ENCODE measurements at regions of chr17 and their contacts with region 1.

Region 1: GRCh38 chr17:75131280-75132017 is at the start of gene NT5C:
- DNase-seq: peak; percentile 70 to 78
- ATAC-seq: peak; percentile 84 to 88 (median 86)
- H3K4me3 ChIP-seq: peak within 1 kb of the TSS; percentile 83
- H3K4me3 Mint-ChIP-seq: peak within 1 kb of the TSS; percentile 89
- H3K27ac ChIP-seq: peak within 1 kb of the TSS; percentile 71
- H3K27ac Mint-ChIP-seq: peak within 1 kb of the TSS; percentile 84 to 89
- H3K4me1 ChIP-seq: peaks cover 21% of the 10 kb centered on the region
- H3K4me1 Mint-ChIP-seq: peaks cover 7 to 18% of the 10 kb centered on the region in 2 donors
- H3K27me3 ChIP-seq: no peaks in the 10 kb centered on the region
- H3K27me3 Mint-ChIP-seq: no peaks in the 10 kb centered on the region
- CTCF ChIP-seq: peak; percentile 50
- total RNA-seq, gene NT5C: 58.1 to 67.4 (median 61.2) TPM

Region 2: DNA sequence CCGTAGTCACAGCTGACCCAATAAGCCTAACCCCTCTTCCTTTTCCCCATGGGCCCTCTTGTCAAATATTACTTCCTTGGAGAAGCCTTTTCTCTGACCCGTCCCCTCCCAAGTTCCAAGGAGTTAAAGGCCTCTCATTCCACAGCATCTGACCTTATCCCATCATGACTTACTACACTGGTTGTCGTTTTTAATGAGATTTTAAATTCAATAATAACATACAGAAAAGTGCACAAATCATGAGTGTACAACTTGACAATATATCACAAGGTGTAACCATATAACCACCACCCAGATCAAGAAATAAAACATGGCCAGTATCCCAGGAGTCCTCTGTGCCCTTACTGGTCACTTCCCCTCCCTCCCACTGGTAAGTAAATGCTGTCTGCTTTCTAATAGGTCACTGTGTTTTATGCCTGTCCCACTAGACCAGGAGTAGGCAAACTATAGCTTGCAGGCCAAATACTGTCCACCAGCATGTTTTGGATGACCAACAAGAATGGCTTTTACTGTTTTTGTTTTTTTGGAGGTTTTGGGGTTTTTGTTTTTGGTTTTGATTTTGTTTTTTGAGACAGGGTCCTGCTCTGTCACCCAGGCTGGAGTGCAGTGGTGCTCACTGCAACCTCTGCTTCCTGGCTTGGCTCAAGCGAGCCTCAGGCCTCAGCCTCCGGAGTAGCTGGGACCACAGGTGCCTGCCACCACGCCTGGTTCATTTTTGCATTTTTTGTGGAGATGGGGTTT is 257.4 kb before region 1 on chr17:
- intact Hi-C with region 1: no loop called
- DNase-seq: peak in 1 of 2 donors; percentile 27
- ATAC-seq: no peak
- H3K4me3 ChIP-seq: peak overlapping the region; percentile 68
- H3K4me3 Mint-ChIP-seq: peak overlapping the region; percentile 95
- H3K27ac ChIP-seq: peak overlapping the region; percentile 91
- H3K27ac Mint-ChIP-seq: peak overlapping the region; percentile 97
- H3K4me1 ChIP-seq: peaks cover 17% of the 10 kb centered on the region
- H3K4me1 Mint-ChIP-seq: peaks cover 22 to 29% of the 10 kb centered on the region in 2 donors
- H3K27me3 ChIP-seq: no peaks in the 10 kb centered on the region
- H3K27me3 Mint-ChIP-seq: no peaks in the 10 kb centered on the region
- CTCF ChIP-seq: no peak

Region 3: GRCh38 chr17:75173526-75173925 is 42.1 kb after region 1 on chr17:
- intact Hi-C with region 1: loop called (anchors 5 kb)
- DNase-seq: no peak
- ATAC-seq: no peak
- H3K4me3 ChIP-seq: no peak overlapping the region
- H3K4me3 Mint-ChIP-seq: no peak overlapping the region
- H3K27ac ChIP-seq: no peak overlapping the region
- H3K27ac Mint-ChIP-seq: peak overlapping the region in 1 of 2 donors; percentile 66
- H3K4me1 ChIP-seq: peaks cover 4% of the 10 kb centered on the region
- H3K4me1 Mint-ChIP-seq: peaks cover 6 to 15% of the 10 kb centered on the region in 2 donors
- H3K27me3 ChIP-seq: no peaks in the 10 kb centered on the region
- H3K27me3 Mint-ChIP-seq: no peaks in the 10 kb centered on the region
- CTCF ChIP-seq: no peak

Region 4: DNA sequence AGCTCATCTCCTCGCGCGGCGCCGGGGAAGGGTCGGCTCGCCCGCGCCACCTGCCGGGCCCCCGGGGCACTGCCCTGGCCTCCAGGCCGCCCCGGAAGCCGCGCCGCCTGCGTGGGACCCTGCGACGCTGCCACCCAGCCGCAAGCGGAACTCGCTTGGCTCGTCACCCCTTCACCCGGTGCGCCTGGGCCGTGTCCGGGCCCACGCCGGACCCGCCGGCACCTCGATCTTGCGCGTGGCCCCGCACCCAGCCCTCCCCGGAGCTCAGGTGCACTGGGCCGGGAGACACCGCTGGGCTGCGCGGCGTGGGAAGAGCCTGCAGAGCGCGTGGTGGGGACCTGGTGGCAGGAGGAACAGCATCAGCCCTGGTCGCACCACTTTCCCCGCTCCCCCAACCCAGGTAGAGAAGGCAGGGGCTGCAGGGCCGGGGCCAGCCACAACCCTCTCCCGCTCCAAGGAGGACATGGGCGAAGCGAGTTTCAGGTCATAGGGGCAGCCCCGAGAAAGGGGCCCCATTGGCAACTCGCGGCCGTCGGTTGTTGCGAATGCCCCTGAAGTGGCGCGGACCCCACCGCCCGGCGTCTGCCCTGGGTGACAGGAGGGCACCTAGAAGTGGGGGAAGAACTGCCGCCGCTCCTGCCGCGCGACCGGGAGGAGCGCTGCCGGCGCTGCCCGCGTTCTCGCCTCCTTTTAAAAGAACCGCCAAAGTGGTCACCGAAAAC is 139.9 kb after region 1 on chr17:
- intact Hi-C with region 1: no loop called
- DNase-seq: peak; percentile 93 to 94
- ATAC-seq: peak; percentile 90 to 98 (median 90)
- H3K4me3 ChIP-seq: peak overlapping the region; percentile 81
- H3K4me3 Mint-ChIP-seq: peak overlapping the region; percentile 88
- H3K27ac ChIP-seq: peak overlapping the region; percentile 91
- H3K27ac Mint-ChIP-seq: peak overlapping the region; percentile 81 to 91
- H3K4me1 ChIP-seq: peaks cover 40% of the 10 kb centered on the region
- H3K4me1 Mint-ChIP-seq: peaks cover 10 to 25% of the 10 kb centered on the region in 2 donors
- H3K27me3 ChIP-seq: no peaks in the 10 kb centered on the region
- H3K27me3 Mint-ChIP-seq: no peaks in the 10 kb centered on the region
- CTCF ChIP-seq: peak; percentile 61

Region 5: GRCh38 chr17:75440738-75441448 is 309.4 kb after region 1 on chr17:
- intact Hi-C with region 1: no loop called
- DNase-seq: no peak
- ATAC-seq: no peak
- H3K4me3 ChIP-seq: no peak overlapping the region
- H3K4me3 Mint-ChIP-seq: no peak overlapping the region
- H3K27ac ChIP-seq: no peak overlapping the region
- H3K27ac Mint-ChIP-seq: no peak overlapping the region
- H3K4me1 ChIP-seq: peaks cover 6% of the 10 kb centered on the region
- H3K4me1 Mint-ChIP-seq: peaks cover 4% of the 10 kb centered on the region in 2 donors
- H3K27me3 ChIP-seq: no peaks in the 10 kb centered on the region
- H3K27me3 Mint-ChIP-seq: no peaks in the 10 kb centered on the region
- CTCF ChIP-seq: no peak

Measured in natural killer cell (primary cell).